PC-9 (cell line): ENCODE measurements at regions of chr11 and their contacts with region 1.

Region 1: DNA sequence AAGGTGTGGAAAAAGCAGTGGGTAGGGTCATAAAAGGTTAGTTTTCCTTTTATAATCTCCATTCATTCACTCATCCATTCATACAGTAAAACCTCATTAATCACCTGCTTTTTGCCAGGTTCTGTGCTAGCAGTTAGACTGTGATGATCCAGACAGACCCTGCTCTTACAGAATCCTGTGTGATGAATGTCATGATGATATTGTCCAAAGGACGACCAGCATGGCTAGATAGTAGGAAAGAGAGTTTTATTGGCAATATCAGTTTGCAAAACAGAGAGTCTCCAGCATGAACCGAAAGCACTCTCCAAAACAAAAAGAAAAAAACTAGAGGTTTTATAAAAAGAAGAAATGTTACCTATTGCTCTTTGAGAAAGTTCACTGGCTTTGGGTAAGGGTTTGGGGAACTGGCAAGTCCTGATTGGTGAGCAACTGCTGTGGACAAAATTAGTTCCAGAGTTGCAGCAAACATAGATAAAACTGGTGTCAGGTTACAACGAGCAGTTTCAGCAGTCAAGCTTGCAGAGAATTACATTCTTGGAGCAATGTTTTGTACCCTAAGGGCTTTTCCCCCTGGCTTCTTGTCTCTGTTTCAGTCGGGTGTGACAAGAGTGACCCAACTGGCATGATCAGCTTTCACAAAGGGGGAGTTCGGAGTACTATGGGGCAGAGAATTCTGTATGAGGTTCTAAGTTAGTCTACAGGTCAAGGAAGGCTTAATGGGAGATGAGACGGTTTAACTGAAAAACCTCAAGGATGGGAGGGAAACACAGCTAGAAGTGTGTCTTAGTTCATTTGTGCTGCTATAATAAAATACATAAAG is 58.3 kb downstream of the HSD17B12 start:
- DNase-seq: peak; percentile 73 to 96
- H3K4me3 ChIP-seq: peak overlapping the region; percentile 32; the same call in 1 of the 2 replicates
- H3K27ac ChIP-seq: peak overlapping the region; percentile 73
- H3K4me1 ChIP-seq: peaks cover 44% of the 10 kb centered on the region
- H3K27me3 ChIP-seq: no peaks in the 10 kb centered on the region
- CTCF ChIP-seq: no peak

Region 2: GRCh38 chr11:43830928-43831440 is 92.2 kb after region 1 on chr11:
- CTCF ChIA-PET with region 1: no interaction called
- POLR2A ChIA-PET with region 1: no interaction called
- intact Hi-C with region 1: loop called (anchors 5 kb)
- DNase-seq: peak; percentile 75 to 99
- H3K4me3 ChIP-seq: peak overlapping the region; percentile 27; the same call in 1 of the 2 replicates
- H3K27ac ChIP-seq: peak overlapping the region; percentile 52
- H3K4me1 ChIP-seq: peaks cover 21% of the 10 kb centered on the region
- H3K27me3 ChIP-seq: no peaks in the 10 kb centered on the region
- CTCF ChIP-seq: no peak